Right ventricle myocardium inferior (tissue), 1 donor: ENCODE measurements at regions of chr20 and their contacts with region 1.

Region 1: GRCh38 chr20:5448449-5449118 is 131.8 kb upstream of the PROKR2 start:
- DNase-seq: no peak
- ATAC-seq: no peak

Region 2: GRCh38 chr20:5205348-5206210 is 243.0 kb before region 1 on chr20:
- intact Hi-C with region 1: loop called (anchors 2 kb)
- DNase-seq: peak; percentile 84
- ATAC-seq: peak; percentile 84

Region 3: GRCh38 chr20:5222919-5223634 is 225.5 kb before region 1 on chr20:
- intact Hi-C with region 1: loop called (anchors 5 kb)
- DNase-seq: no peak
- ATAC-seq: peak; percentile 62

Region 4: GRCh38 chr20:5297280-5298004 is 151.1 kb before region 1 on chr20:
- intact Hi-C with region 1: no loop called
- DNase-seq: no peak
- ATAC-seq: no peak